ENCODE measurements at regions of chr2 and their contacts with region 1.

Region 1: GRCh38 chr2:236512902-236513435 is 56.7 kb upstream of the ACKR3 start:
- DNase-seq: peak; percentile 22
- ATAC-seq: peak; percentile 98
- H3K4me3 ChIP-seq: no peak overlapping the region
- H3K27ac ChIP-seq: no peak overlapping the region
- H3K4me1 ChIP-seq: no peaks in the 10 kb centered on the region
- H3K27me3 ChIP-seq: peaks cover 29% of the 10 kb centered on the region
- CTCF ChIP-seq: peak; percentile 61 to 90 (median 76)
- POLR2A ChIP-seq: no peak
- RAD21 ChIP-seq: peak; percentile 63

Region 2: GRCh38 chr2:236352761-236353593 is 160.0 kb before region 1 on chr2:
- CTCF ChIA-PET with region 1: no interaction called
- POLR2A ChIA-PET with region 1: no interaction called
- RAD21 ChIA-PET with region 1: no interaction called
- intact Hi-C with region 1: loop called (anchors 10 kb)
- DNase-seq: peak; percentile 8
- ATAC-seq: peak; percentile 58
- H3K4me3 ChIP-seq: no peak overlapping the region
- H3K27ac ChIP-seq: no peak overlapping the region
- H3K4me1 ChIP-seq: no peaks in the 10 kb centered on the region
- H3K27me3 ChIP-seq: no peaks in the 10 kb centered on the region
- CTCF ChIP-seq: peak; percentile 70 to 92 (median 73)
- POLR2A ChIP-seq: no peak
- RAD21 ChIP-seq: peak; percentile 79

Region 3: DNA sequence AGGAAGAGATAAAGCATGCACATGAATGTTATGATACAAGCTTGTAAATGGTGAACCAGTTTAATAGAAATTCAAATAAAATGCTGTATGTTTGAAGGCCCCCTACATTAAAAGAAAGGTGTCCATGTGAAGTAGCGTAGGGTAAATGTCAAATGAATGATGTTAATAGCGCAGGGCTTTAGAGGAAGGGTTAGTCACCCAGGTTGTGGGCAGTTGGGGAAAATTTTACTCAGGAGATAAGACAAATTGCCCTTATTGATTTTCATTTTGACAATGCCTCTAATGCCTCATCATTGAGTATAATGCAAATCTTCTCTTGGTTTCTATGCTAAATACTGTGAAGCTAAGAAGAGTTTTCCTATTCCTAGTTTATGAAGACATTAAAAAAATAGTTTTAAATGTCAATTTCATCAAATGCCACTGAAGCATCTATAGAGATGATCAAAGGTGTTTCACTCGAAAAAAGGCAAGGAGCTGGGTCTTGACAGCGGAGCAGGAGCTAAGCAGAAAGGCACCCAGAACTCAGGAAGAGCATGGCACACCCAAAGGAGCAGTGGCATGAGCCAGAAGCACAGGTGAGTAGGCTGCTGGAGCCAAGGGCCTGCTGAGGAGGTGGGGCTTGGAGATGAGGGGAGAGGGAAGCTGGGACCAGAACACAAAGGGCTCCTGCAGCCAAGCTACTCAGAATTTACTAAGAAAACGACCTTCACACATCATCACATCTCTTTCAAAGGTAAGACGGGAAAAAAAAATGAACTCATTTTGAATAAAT is 72.7 kb before region 1 on chr2:
- CTCF ChIA-PET with region 1: no interaction called
- POLR2A ChIA-PET with region 1: no interaction called
- RAD21 ChIA-PET with region 1: no interaction called
- intact Hi-C with region 1: no loop called
- DNase-seq: no peak
- ATAC-seq: no peak
- H3K4me3 ChIP-seq: no peak overlapping the region
- H3K27ac ChIP-seq: no peak overlapping the region
- H3K4me1 ChIP-seq: no peaks in the 10 kb centered on the region
- H3K27me3 ChIP-seq: peaks cover 12% of the 10 kb centered on the region
- CTCF ChIP-seq: no peak
- POLR2A ChIP-seq: no peak
- RAD21 ChIP-seq: no peak

Region 4: DNA sequence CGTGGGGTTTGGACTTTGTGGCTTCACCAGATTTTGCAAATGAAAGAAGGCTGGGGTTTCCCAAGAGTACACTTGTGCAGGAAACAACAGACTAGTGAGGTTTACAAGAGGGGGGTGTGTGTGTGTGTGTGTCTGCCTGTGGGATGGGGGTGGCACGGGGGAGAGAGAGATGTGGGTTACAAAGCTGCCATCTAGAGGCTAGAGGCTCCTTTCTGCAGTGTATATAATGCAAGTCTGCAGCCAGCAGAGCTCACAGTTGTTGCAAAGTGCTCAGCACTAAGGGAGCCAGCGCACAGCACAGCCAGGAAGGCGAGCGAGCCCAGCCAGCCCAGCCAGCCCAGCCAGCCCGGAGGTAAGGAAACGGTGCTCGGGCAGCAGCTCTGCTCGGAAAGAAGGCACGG is 56.6 kb after region 1 on chr2 and contains the start of gene ACKR3:
- CTCF ChIA-PET with region 1: interaction called, 18 read pairs
- POLR2A ChIA-PET with region 1: no interaction called
- RAD21 ChIA-PET with region 1: interaction called in 1 of 2 experiments, 5 read pairs
- intact Hi-C with region 1: no loop called
- DNase-seq: peak; percentile 21
- ATAC-seq: peak; percentile 96
- H3K4me3 ChIP-seq: no peak within 1 kb of the TSS
- H3K27ac ChIP-seq: no peak within 1 kb of the TSS
- H3K4me1 ChIP-seq: 0 out of 4 replicates have a peak, but pooled peaks cover 0 to 2% of the 10 kb centered on the region in 2 experiments
- H3K27me3 ChIP-seq: peaks cover 44% of the 10 kb centered on the region
- CTCF ChIP-seq: peak; percentile 34 to 46 (median 42); a peak in 5 of 6 replicates
- POLR2A ChIP-seq: no peak
- RAD21 ChIP-seq: peak; percentile 54
- total RNA-seq, gene ACKR3: 0.20 TPM

Region 5: GRCh38 chr2:237026981-237027711 is 514.2 kb after region 1 on chr2:
- CTCF ChIA-PET with region 1: interaction called, 25 read pairs
- POLR2A ChIA-PET with region 1: no interaction called
- RAD21 ChIA-PET with region 1: interaction called in 1 of 2 experiments, 8 read pairs
- intact Hi-C with region 1: loop called (anchors 1 kb)
- DNase-seq: peak; percentile 29
- ATAC-seq: peak; percentile 94
- H3K4me3 ChIP-seq: no peak overlapping the region
- H3K27ac ChIP-seq: no peak overlapping the region
- H3K4me1 ChIP-seq: peaks cover 0 to 14% of the 10 kb centered on the region in 2 experiments; a peak in 2 of 4 replicates
- H3K27me3 ChIP-seq: no peaks in the 10 kb centered on the region
- CTCF ChIP-seq: peak; percentile 74 to 83 (median 80); a peak in 5 of 6 replicates
- POLR2A ChIP-seq: no peak
- RAD21 ChIP-seq: peak; percentile 89

Region 6: DNA sequence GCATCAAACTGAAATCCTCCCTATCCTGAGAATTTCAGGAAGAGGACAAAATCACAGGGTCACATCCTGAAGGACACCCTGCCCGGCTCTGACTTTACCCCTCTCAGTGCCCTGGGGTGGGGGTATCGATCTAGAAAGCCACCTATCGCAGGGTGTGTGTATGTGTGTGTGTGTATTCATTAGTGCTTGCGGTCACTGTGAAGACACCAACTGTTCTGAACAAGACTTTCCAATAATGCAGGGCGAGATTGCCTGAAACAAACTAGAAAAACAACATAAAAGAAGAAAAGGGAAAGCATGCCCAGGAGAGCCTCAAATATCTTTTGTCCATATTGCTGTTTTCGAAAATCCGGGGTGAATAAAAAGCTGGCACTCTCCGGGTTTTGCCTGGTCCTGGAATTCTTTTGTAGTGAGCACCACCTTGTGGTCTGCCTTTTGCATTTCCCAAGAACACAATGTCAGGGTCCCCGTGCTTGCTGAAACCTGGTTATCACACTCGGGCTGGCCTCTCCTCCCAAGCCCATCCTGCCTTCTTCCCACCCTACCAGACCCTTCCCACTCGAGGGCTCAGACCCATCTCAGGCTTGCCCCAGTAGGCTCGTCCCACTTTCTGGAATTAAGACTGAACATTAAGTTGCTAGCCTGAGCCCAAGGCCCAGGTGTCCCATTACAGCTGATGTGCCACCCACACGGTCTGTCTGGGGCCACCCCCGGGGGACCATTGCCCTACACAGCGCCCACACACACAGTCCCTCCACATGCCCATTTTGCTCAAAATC is 547.8 kb after region 1 on chr2:
- CTCF ChIA-PET with region 1: interaction called, 12 read pairs
- POLR2A ChIA-PET with region 1: no interaction called
- RAD21 ChIA-PET with region 1: interaction called in 1 of 2 experiments, 3 read pairs
- intact Hi-C with region 1: loop called (anchors 1 kb)
- DNase-seq: peak; percentile 48
- ATAC-seq: peak; percentile 92
- H3K4me3 ChIP-seq: no peak overlapping the region
- H3K27ac ChIP-seq: no peak overlapping the region
- H3K4me1 ChIP-seq: peaks cover 0 to 7% of the 10 kb centered on the region in 2 experiments; a peak in 1 of 4 replicates
- H3K27me3 ChIP-seq: no peaks in the 10 kb centered on the region
- CTCF ChIP-seq: peak; percentile 56 to 72 (median 68); a peak in 5 of 6 replicates
- POLR2A ChIP-seq: no peak
- RAD21 ChIP-seq: peak; percentile 84

Measured in HCT116 (cell line).